GM12878 (cell line): ENCODE measurements at regions of chr6 and their contacts with region 1.

Region 1: DNA sequence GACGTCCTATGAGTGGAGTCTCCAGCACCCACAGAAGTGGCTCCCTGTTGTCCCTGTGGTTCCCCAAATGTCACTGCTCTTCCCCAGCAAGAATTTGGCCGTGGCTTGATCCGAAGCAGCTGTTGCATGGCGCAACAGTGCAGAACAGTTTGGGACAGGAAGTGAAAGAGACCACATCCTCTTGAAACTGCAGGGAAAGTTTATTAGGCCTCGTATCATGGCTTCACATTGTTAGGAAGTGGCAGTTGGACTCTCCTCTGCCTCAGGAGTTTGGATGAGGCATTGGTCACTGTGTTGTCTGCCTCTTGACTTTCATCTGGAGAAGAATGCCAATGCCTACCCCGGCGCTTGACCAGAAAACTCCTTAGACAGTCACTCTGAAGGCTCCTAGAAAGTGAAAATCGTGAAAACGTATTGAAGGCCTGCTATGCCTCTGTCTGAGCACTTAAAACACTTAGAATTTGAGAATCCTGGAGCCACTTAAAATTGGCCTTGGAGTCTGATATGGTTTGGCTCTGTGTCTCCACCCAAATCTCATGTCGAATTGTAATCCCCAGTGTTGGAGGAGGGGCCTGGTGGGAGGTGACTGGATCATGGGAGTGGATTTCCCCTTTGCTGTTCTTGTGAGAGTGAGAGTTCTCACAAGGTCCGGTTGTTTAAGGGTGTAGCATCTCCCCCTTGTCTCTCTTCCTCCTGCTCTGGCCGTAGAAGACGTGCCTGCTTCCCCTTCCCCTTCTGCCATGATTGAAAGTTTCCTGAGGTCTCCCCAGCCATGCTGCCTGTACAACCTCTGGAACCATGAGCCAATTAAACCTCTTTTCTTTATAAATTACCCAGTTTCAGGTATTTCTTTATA is 334.9 kb upstream of the JARID2 start:
- DNase-seq: peak; percentile 78
- ATAC-seq: peak; percentile 93
- H3K4me3 ChIP-seq: 0 out of 2 replicates have a peak overlapping the region, but pooled peaks have one; percentile 24
- H3K27ac ChIP-seq: peak overlapping the region; percentile 91
- H3K4me1 ChIP-seq: peaks cover 23% of the 10 kb centered on the region
- H3K27me3 ChIP-seq: no peaks in the 10 kb centered on the region
- CTCF ChIP-seq: no peak
- EP300 ChIP-seq: peak; percentile 28 to 94; a peak in 2 of 4 replicates
- POLR2A ChIP-seq: peak; percentile 43; the same call in 1 of the 2 replicates
- RAD21 ChIP-seq: peak; percentile 41; the same call in 1 of the 2 replicates

Region 2: GRCh38 chr6:14770572-14770971 is 140.3 kb before region 1 on chr6:
- CTCF ChIA-PET with region 1: no interaction called
- POLR2A ChIA-PET with region 1: no interaction called
- RAD21 ChIA-PET with region 1: no interaction called
- SMC1A ChIA-PET with region 1: no interaction called
- in situ Hi-C with region 1: no loop called
- intact Hi-C with region 1: no loop called
- DNase-seq: no peak
- ATAC-seq: no peak
- H3K4me3 ChIP-seq: no peak overlapping the region
- H3K27ac ChIP-seq: no peak overlapping the region
- H3K4me1 ChIP-seq: no peaks in the 10 kb centered on the region
- H3K27me3 ChIP-seq: no peaks in the 10 kb centered on the region
- CTCF ChIP-seq: no peak
- EP300 ChIP-seq: no peak
- POLR2A ChIP-seq: no peak
- RAD21 ChIP-seq: no peak

Region 3: DNA sequence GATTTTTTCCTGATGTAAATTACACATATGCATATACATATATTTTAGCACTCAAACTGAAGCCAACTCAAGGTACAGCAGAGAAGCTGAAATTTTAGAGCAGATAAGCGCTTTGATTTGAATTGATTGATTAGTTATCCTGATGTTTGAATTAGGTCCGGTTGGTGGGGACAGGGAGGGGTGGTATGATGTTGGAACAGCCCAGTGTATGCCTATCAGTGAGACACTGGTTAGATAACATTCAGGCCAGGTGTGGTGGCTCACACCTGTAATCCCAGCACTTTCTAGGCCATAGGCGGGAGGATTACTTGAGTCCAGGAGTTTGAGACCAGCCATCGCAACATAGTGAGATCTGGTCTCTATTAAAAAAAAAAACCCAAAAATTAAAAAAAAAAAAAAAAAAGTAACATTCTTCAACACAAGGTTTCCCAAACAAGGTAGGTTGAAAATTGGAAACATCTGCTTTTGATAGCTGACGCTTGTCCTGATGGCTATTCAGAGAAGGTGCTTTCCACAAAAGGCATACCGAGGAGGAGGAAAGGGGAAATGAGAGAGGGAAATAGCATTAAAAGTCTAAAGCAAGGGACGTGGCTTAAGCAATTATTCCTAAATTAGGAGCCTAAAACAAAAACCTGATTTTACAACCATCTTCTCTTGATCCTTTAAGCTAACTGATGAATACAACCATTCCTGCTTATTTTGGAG is 46.6 kb after region 1 on chr6:
- CTCF ChIA-PET with region 1: no interaction called
- POLR2A ChIA-PET with region 1: no interaction called
- RAD21 ChIA-PET with region 1: interaction called, 3 read pairs
- SMC1A ChIA-PET with region 1: interaction called, 3 read pairs
- in situ Hi-C with region 1: no loop called
- intact Hi-C with region 1: loop called (anchors 5 kb)
- DNase-seq: peak; percentile 35
- ATAC-seq: peak; percentile 70
- H3K4me3 ChIP-seq: no peak overlapping the region
- H3K27ac ChIP-seq: peak overlapping the region; percentile 4; the same call in 1 of the 2 replicates
- H3K4me1 ChIP-seq: peaks cover 16% of the 10 kb centered on the region
- H3K27me3 ChIP-seq: no peaks in the 10 kb centered on the region
- CTCF ChIP-seq: no peak
- EP300 ChIP-seq: peak; percentile 71 to 73; a peak in 3 of 4 replicates
- POLR2A ChIP-seq: no peak
- RAD21 ChIP-seq: no peak